Activated naive CD4-positive, alpha-beta T cell treated with anti-CD3 and anti-CD28 coated beads for 36 hours (primary cell): ENCODE measurements at regions of chr11 and their contacts with region 1.

Region 1: DNA sequence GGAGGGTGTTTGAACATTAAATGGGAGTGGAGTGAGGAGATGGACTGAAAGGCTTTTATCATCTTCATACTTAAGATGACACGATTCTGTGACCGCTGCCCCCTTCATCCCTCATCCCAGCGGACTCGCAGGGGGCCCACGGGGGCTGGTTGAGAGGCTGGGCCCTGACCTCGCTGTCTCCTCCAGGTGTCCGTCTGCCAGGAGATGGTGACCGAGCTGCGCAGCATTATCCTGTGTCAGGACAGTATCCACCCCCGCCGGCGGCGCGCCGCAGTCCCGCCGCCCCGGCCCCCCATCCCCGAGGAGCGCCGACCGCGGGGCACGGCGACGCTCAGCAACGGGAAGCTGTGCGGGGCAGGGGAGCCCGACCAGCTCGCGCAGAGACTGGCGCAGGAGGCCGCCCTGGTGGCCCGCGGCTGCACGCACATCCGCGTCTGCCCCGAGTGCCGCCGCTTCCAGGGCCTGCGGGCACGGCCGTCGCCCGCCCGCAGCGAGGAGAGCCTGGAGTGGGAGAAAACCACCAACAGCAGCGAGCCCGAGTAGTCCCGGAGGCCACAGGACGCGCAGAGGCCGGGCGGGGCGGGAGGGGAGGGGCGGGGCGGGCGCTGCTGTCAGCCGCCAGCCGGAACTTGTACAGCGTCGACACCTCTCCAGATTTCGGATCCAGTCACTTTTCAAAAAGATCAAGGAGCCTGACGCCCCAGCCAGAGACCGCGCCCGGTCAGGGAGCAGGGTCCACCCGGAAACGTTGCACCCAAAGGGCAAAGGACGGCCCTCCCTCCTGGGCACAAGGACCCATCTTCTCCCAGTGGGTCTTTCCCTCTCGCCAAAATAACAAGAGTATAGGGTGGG is 38.0 kb upstream of the TBCEL start:
- DNase-seq: peak; percentile 61
- H3K4me3 Mint-ChIP-seq: peak overlapping the region; percentile 53
- H3K27ac Mint-ChIP-seq: no peak overlapping the region
- H3K4me1 Mint-ChIP-seq: peaks cover 11% of the 10 kb centered on the region
- H3K27me3 Mint-ChIP-seq: peaks cover 3% of the 10 kb centered on the region

Region 2: GRCh38 chr11:121023848-121024751 is 38.2 kb after region 1 on chr11 and contains the start of gene TBCEL:
- CTCF ChIA-PET with region 1: no interaction called
- intact Hi-C with region 1: loop called (anchors 2 kb)
- DNase-seq: peak; percentile 89
- H3K4me3 Mint-ChIP-seq: peak within 1 kb of the TSS; percentile 83
- H3K27ac Mint-ChIP-seq: peak within 1 kb of the TSS; percentile 44
- H3K4me1 Mint-ChIP-seq: peaks cover 14% of the 10 kb centered on the region
- H3K27me3 Mint-ChIP-seq: no peaks in the 10 kb centered on the region
- total RNA-seq, gene TBCEL: 5.2 to 5.3 TPM

Region 3: DNA sequence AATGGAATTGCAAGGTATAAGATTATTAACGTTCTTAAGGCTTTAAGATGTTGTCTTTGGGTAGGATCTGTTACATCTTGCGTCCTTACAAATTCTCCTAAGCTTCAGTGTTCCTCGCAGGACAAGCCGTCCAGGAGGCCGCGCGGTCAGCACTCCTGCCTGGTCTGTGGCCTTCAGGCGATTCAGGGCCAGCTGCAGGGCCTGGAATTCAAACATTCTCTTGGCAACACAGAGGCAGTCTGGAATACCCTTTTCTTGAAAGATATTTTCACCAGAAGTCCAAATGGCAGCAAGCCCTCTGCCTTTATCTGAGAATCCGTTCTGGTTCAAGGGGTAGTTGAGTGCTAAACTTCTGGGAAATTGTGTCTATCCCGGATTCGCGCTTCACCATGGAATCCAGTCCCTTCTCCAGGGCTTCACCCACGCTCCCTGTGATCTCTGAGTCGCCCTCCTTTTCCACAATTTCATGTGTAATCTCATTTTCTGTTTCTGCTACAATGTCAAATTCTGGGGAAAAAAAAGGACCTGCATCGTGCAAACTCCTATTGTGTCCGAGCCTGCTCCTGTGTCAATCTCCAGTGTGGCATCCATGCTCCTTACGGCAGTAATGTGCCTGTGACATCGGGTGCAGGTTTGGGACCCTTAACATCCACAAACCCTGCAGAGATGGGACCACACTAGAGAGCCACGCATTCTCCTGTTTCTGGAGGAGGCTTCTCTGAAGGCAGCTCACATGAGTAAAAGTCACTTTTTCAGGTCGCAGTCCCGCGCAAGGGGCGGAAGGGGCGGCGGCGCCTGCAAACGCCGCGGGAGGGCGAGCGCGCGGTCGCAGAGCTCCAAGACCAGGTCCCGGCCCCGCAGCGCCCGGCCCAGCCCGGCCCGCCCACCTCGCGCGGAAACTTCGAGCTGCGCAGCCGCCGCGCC is 440.8 kb after region 1 on chr11:
- CTCF ChIA-PET with region 1: no interaction called
- intact Hi-C with region 1: loop called (anchors 10 kb)
- DNase-seq: peak; percentile 69
- H3K4me3 Mint-ChIP-seq: peak overlapping the region; percentile 63
- H3K27ac Mint-ChIP-seq: no peak overlapping the region
- H3K4me1 Mint-ChIP-seq: peaks cover 37% of the 10 kb centered on the region
- H3K27me3 Mint-ChIP-seq: no peaks in the 10 kb centered on the region